MCF 10A (cell line): ENCODE measurements at regions of chr9 and their contacts with region 1.

Region 1: DNA sequence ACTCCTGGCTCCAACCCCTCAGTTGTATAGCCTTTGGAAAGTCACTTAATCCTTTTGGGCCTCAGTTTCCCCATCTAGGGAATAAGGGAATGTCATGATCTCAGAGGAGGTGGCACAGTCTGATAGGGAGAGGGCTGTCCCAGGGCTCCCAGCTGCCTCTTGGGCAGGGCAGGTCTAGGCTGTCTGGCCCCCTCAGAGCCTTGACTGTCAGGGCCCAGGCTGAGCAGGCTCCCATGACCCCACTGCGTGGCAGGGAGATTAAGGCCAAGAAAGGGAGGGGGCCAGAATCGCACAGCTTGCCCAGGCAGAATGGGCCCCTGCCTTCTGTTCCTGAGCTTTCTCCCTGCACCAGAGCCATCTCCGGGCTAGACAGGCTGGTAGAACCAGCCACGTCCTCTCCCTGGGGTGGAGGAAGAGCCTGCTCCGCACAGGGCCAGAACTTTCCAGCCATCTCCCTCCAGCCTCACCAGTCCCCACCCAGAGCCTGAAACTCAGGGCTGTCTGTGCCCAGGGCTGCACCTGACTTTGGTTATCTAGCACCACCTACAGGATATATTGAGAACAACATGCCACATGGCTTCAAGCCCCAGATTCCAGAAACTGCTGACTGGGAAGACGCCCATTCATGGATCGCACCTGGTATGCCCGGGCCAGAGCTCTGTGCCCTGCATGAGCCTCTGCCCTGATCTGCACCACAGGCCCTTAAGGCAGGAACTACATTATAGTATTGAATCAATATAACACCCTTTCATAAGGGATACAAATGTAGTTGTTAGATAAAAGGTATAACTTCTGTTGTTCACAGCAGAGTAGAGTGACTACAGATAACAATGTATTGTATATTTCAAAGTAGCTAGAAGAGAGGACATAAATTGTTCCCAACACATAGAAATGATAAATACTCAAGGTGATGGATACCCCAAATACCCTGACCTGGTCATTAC is 32.0 kb downstream of the NAIF1 start:
- DNase-seq: peak; percentile 88
- H3K4me3 Mint-ChIP-seq: no peak overlapping the region
- H3K27ac Mint-ChIP-seq: no peak overlapping the region
- H3K4me1 Mint-ChIP-seq: no peaks in the 10 kb centered on the region
- H3K27me3 Mint-ChIP-seq: no peaks in the 10 kb centered on the region
- CTCF ChIP-seq: peak; percentile 81

Region 2: GRCh38 chr9:127937388-127938280 is 97.5 kb before region 1 on chr9 and contains the start of gene DPM2:
- CTCF ChIA-PET with region 1: interaction called, 172 read pairs
- POLR2A ChIA-PET with region 1: interaction called, 19 read pairs
- intact Hi-C with region 1: no loop called
- DNase-seq: peak; percentile 72
- H3K4me3 Mint-ChIP-seq: peak within 1 kb of the TSS; percentile 82
- H3K27ac Mint-ChIP-seq: peak within 1 kb of the TSS; percentile 79
- H3K4me1 Mint-ChIP-seq: peaks cover 28% of the 10 kb centered on the region
- H3K27me3 Mint-ChIP-seq: no peaks in the 10 kb centered on the region
- CTCF ChIP-seq: no peak
- total RNA-seq, gene DPM2: 41.5 and 41.8 TPM in 2 replicates

Region 3: DNA sequence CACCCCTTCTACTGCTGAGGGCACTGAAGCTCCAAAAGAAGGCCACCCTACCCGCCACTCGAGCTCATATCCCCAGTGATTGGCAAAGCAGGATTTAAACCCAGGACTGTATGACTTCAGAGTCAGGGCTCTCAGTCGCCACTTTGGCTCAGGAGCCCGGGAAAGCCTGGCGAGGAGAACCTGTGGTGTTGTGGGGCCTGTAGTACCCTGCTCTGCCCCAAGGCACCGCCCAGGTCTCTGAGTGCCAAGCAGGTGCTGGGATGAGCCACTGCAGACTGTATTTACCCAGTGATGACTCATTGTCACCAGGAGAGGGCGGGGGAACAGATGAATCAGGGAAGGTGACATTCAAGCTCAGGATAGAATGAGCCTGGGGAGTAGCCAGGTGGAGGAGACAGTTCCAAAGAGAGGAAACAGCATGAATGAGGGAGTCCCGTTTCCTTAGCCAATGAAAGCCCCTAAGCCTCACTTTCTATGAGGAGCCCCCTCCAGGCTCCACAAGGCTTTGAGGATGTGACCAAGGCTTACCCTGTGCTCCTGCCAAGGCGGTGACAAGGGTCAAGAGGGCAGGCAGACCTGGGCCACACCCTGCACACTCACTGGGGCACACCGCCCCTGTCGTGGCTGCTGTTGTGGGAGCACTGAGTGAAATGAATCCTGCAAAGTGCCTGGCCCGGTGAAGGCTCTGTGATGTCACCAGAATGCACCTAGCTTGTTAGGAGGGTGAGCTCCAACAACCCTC is 79.6 kb before region 1 on chr9:
- CTCF ChIA-PET with region 1: interaction called, 60 read pairs
- POLR2A ChIA-PET with region 1: interaction called, 5 read pairs
- intact Hi-C with region 1: no loop called
- DNase-seq: peak; percentile 81
- H3K4me3 Mint-ChIP-seq: peak overlapping the region; percentile 29
- H3K27ac Mint-ChIP-seq: no peak overlapping the region
- H3K4me1 Mint-ChIP-seq: peaks cover 24% of the 10 kb centered on the region
- H3K27me3 Mint-ChIP-seq: no peaks in the 10 kb centered on the region
- CTCF ChIP-seq: peak; percentile 36

Region 4: GRCh38 chr9:127980706-127981558 is 54.2 kb before region 1 on chr9 and contains the start of gene EEIG1:
- CTCF ChIA-PET with region 1: interaction called, 10 read pairs
- POLR2A ChIA-PET with region 1: interaction called, 15 read pairs
- intact Hi-C with region 1: no loop called
- DNase-seq: peak; percentile 89
- H3K4me3 Mint-ChIP-seq: peak within 1 kb of the TSS; percentile 89
- H3K27ac Mint-ChIP-seq: peak within 1 kb of the TSS; percentile 71
- H3K4me1 Mint-ChIP-seq: peaks cover 17% of the 10 kb centered on the region
- H3K27me3 Mint-ChIP-seq: no peaks in the 10 kb centered on the region
- CTCF ChIP-seq: no peak
- total RNA-seq, gene EEIG1: 17.5 and 23.9 TPM in 2 replicates

Region 5: GRCh38 chr9:128020692-128021091 is 14.4 kb before region 1 on chr9:
- CTCF ChIA-PET with region 1: interaction called, 25 read pairs
- POLR2A ChIA-PET with region 1: interaction called, 3 read pairs
- intact Hi-C with region 1: no loop called
- DNase-seq: no peak
- H3K4me3 Mint-ChIP-seq: no peak overlapping the region
- H3K27ac Mint-ChIP-seq: no peak overlapping the region
- H3K4me1 Mint-ChIP-seq: peaks cover 8% of the 10 kb centered on the region
- H3K27me3 Mint-ChIP-seq: no peaks in the 10 kb centered on the region
- CTCF ChIP-seq: no peak

Region 6: DNA sequence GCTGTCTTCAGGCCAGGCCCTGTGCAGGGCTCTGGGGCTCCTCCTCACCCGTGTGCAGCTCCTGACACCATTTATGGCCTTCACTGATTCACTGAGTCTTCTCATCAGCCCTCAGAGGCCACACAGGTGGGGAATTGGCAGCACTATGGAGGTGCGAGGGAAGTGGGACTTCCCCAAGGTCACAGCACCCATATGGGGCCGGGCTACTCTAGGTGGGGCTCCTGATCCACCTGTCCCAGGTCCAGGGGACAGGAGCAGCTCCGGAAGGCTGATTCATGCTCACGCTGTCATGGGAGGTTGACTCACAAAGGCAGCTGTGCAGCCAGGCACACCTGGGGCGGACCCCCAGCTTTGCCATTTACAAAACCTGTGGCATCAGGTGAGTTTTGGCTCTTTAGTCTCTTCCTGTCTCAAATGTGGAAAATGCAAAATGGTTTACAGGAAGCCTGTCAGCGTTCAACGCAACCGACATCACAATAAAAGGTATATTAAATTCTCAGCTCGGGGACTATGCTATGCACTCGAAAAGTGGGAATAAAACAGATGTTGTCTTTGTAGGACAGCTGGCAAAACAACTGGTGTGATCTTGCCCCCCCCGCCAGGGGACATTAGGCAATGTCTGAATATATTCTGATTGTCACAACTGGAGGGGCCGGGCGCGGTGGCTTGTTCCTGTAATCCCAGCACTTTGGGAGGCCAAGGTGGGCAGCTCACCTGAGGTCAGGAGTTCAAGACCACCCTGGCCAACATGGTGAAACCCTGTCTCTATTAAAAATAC is 17.0 kb after region 1 on chr9:
- CTCF ChIA-PET with region 1: interaction called, 43 read pairs
- POLR2A ChIA-PET with region 1: interaction called, 3 read pairs
- intact Hi-C with region 1: no loop called
- DNase-seq: peak; percentile 54
- H3K4me3 Mint-ChIP-seq: no peak overlapping the region
- H3K27ac Mint-ChIP-seq: no peak overlapping the region
- H3K4me1 Mint-ChIP-seq: peaks cover 9% of the 10 kb centered on the region
- H3K27me3 Mint-ChIP-seq: no peaks in the 10 kb centered on the region
- CTCF ChIP-seq: no peak

Region 7: DNA sequence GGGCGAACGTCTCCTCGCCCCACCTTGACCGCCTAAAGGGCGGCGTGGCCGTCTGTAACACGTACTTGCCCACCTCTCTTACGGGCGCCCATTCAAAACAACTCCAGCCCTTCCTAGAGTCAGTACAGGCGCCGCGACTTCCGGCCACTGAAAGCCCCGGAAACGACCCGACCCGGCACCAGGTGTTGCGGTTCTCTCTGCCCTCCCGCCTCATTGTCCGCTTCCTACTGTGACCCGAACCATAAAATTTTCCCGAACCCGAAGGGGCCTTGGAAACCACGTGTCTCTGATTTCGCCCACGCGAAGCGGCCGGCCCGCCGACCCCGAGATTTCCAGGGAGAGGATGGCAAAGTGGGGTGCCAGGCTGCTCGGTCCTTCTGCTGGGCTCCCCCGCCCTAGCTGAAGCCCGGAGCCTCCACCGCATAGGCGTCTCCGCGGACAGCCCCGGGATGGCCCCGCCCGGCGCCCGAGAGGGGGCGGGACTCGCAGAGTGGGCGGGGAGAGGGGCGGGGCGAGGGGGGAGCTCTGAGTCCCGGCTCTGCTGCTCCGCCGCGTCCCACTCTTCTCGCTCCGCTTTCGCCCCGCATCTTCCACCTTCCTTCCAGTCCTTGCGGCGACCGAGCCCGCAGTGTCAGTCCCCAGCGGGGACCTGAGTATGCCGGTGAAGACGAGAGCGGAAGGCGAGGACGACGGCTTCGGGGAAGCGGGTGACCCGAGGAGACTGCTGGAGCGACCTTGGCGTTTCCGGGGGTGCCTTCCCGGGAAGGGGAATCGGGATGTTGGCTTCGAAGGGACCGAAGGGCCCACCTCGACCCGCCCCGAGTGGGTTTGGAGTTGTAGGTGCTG is 93.1 kb after region 1 on chr9:
- CTCF ChIA-PET with region 1: no interaction called
- POLR2A ChIA-PET with region 1: no interaction called
- intact Hi-C with region 1: no loop called
- DNase-seq: peak; percentile 92
- H3K4me3 Mint-ChIP-seq: peak overlapping the region; percentile 84
- H3K27ac Mint-ChIP-seq: peak overlapping the region; percentile 97
- H3K4me1 Mint-ChIP-seq: peaks cover 23% of the 10 kb centered on the region
- H3K27me3 Mint-ChIP-seq: peaks cover 9% of the 10 kb centered on the region
- CTCF ChIP-seq: no peak